Ovary (tissue), 10 donors: ENCODE measurements at regions of chr17 and their contacts with region 1.

Region 1: GRCh38 chr17:2707721-2708584 is 3.6 kb downstream of the CLUH start:
- DNase-seq: peak in 2 of 5 donors; percentile 63 to 66
- H3K4me3 ChIP-seq: no peak overlapping the region
- H3K27ac ChIP-seq: peak overlapping the region in 1 of 2 donors; percentile 33
- H3K4me1 ChIP-seq: peaks cover 23% of the 10 kb centered on the region
- H3K27me3 ChIP-seq: no peaks in the 10 kb centered on the region
- CTCF ChIP-seq: peak in 1 of 3 donors; percentile 24
- EP300 ChIP-seq: no peak
- POLR2A ChIP-seq: no peak

Region 2: GRCh38 chr17:2580661-2581060 is 127.3 kb before region 1 on chr17:
- intact Hi-C with region 1: no loop called
- DNase-seq: no peak
- H3K4me3 ChIP-seq: no peak overlapping the region
- H3K27ac ChIP-seq: no peak overlapping the region
- H3K4me1 ChIP-seq: no peaks in the 10 kb centered on the region
- H3K27me3 ChIP-seq: no peaks in the 10 kb centered on the region
- CTCF ChIP-seq: no peak
- EP300 ChIP-seq: no peak
- POLR2A ChIP-seq: no peak

Region 3: GRCh38 chr17:2592971-2593820 is 114.8 kb before region 1 on chr17 and contains the start of gene PAFAH1B1:
- intact Hi-C with region 1: loop called in 1 of 4 experiments (anchors 10 kb)
- DNase-seq: peak; percentile 90 to 96 (median 92)
- H3K4me3 ChIP-seq: peak within 1 kb of the TSS; percentile 100
- H3K27ac ChIP-seq: peak within 1 kb of the TSS; percentile 94 to 100
- H3K4me1 ChIP-seq: peaks cover 1% of the 10 kb centered on the region
- H3K27me3 ChIP-seq: no peaks in the 10 kb centered on the region
- CTCF ChIP-seq: peak in 2 of 3 donors; percentile 36 to 38
- EP300 ChIP-seq: no peak
- POLR2A ChIP-seq: peak; percentile 90
- total RNA-seq, gene PAFAH1B1: 73.6 to 125 (median 108) TPM

Region 4: DNA sequence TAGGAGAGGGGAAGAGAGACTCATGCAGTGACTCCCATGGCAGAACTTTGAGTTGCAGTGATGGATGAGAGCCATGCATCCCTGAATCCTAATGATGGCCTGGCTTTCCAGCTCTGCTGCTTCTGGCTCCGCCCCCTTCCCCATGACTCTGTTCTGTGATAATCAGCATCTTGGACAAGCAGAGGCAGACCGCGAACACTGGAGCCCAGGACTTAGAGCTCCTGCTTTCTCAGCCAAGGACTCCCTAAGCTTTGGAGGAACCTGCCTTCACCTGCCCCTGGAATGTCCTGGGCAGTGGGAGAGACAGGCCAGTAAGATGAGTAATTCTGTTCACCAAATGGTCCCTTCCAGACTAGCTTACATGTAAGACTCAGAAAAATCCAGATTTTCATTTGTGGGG is 29.0 kb after region 1 on chr17:
- intact Hi-C with region 1: no loop called
- DNase-seq: no peak
- H3K4me3 ChIP-seq: no peak overlapping the region
- H3K27ac ChIP-seq: no peak overlapping the region
- H3K4me1 ChIP-seq: no peaks in the 10 kb centered on the region
- H3K27me3 ChIP-seq: no peaks in the 10 kb centered on the region
- CTCF ChIP-seq: no peak
- EP300 ChIP-seq: no peak
- POLR2A ChIP-seq: no peak

Region 5: GRCh38 chr17:2828397-2829038 is 120.6 kb after region 1 on chr17:
- intact Hi-C with region 1: no loop called
- DNase-seq: peak; percentile 52 to 82 (median 67)
- H3K4me3 ChIP-seq: no peak overlapping the region
- H3K27ac ChIP-seq: no peak overlapping the region
- H3K4me1 ChIP-seq: peaks cover 2% of the 10 kb centered on the region
- H3K27me3 ChIP-seq: no peaks in the 10 kb centered on the region
- CTCF ChIP-seq: peak; percentile 59 to 80 (median 74)
- EP300 ChIP-seq: no peak
- POLR2A ChIP-seq: no peak